Ascending aorta (tissue), 2 donors: ENCODE measurements at regions of chr18 and their contacts with region 1.

Region 1: DNA sequence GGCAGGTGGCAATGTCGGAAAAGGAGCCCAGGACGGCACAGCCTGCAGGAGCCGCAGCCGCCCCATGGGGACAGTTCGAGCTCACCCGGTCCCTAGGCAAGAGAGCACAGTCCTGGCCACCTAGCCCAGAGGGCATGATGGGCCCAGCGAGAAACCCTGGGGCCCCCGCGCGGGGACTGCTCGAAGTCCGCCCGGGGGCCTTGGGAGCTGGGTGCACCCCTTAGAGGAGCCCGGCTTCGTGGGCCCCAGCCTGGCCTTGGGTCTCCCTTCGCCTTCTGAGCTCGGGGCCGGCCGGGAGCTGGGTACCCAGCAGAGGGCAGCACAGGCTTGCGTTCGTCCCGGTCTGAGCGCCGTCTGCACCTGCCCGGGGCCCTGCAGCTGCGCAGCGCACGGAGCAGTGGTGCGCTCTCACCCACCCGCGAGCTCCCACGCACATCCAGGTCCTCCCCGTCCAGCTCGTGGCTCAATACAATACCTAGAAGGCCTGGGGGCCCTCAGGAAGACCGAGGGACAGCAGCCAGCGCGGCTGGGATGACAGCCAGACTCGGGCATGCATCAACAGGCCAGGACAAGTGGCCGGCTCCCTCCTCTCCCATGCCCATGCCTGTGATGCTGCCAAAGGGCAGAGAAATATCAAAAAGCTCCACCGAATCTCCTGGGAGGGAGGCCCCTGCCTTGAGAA is 96.2 kb upstream of the ZNF532 start:
- DNase-seq: peak in 1 of 2 donors; percentile 83
- H3K4me3 ChIP-seq: peak overlapping the region; percentile 19 to 56
- H3K27ac ChIP-seq: no peak overlapping the region
- H3K4me1 ChIP-seq: peaks cover 0 to 3% of the 10 kb centered on the region in 2 donors
- H3K27me3 ChIP-seq: no peaks in the 10 kb centered on the region
- CTCF ChIP-seq: peak; percentile 81 to 86 (median 85)

Region 2: GRCh38 chr18:59070181-59070912 is 301.9 kb after region 1 on chr18:
- intact Hi-C with region 1: loop called (anchors 1 kb)
- DNase-seq: peak in 1 of 2 donors; percentile 92
- H3K4me3 ChIP-seq: no peak overlapping the region
- H3K27ac ChIP-seq: no peak overlapping the region
- H3K4me1 ChIP-seq: no peaks in the 10 kb centered on the region
- H3K27me3 ChIP-seq: no peaks in the 10 kb centered on the region
- CTCF ChIP-seq: peak; percentile 73 to 87 (median 76)